ENCODE measurements at regions of chr2 and their contacts with region 1.

Region 1: GRCh38 chr2:165434865-165435496 is 34.5 kb upstream of the CSRNP3 start:
- DNase-seq: peak in 1 of 2 experiments; percentile 57
- H3K4me3 ChIP-seq: no peak overlapping the region
- H3K4me3 Mint-ChIP-seq: peak overlapping the region; percentile 42
- H3K27ac Mint-ChIP-seq: peak overlapping the region; percentile 84
- H3K4me1 ChIP-seq: peaks cover 25% of the 10 kb centered on the region
- H3K4me1 Mint-ChIP-seq: peaks cover 7% of the 10 kb centered on the region
- H3K27me3 ChIP-seq: no peaks in the 10 kb centered on the region
- H3K27me3 Mint-ChIP-seq: no peaks in the 10 kb centered on the region
- CTCF ChIP-seq: no peak

Region 2: GRCh38 chr2:165382362-165382761 is 52.6 kb before region 1 on chr2:
- CTCF ChIA-PET with region 1: no interaction called
- POLR2A ChIA-PET with region 1: no interaction called
- intact Hi-C with region 1: no loop called
- DNase-seq: no peak
- H3K4me3 ChIP-seq: no peak overlapping the region
- H3K4me3 Mint-ChIP-seq: no peak overlapping the region
- H3K27ac Mint-ChIP-seq: no peak overlapping the region
- H3K4me1 ChIP-seq: no peaks in the 10 kb centered on the region
- H3K4me1 Mint-ChIP-seq: no peaks in the 10 kb centered on the region
- H3K27me3 ChIP-seq: no peaks in the 10 kb centered on the region
- H3K27me3 Mint-ChIP-seq: peaks cover 14% of the 10 kb centered on the region
- CTCF ChIP-seq: no peak

Region 3: DNA sequence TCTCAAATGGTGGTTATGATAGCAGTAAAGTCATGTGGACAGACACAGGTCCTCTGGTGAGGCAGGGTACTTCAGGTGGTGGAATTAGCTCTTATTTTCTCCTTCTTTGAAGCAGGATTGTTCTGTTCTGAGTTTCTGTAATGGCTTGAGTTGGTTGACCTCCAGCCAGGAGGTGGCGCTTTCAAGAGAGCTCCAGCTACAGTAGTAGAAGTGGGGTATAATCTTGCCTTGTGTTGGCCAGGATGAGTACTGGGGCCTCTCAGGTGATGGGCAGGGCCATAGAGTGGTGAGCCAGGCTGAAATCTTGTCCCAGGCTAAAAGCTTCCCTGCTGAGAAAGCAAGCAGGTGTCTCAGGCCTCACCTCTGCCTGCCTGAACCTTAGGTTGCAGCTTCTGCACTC is 18.0 kb before region 1 on chr2:
- CTCF ChIA-PET with region 1: no interaction called
- POLR2A ChIA-PET with region 1: no interaction called
- intact Hi-C with region 1: loop called (anchors 1 kb)
- DNase-seq: no peak
- H3K4me3 ChIP-seq: no peak overlapping the region
- H3K4me3 Mint-ChIP-seq: peak overlapping the region; percentile 17
- H3K27ac Mint-ChIP-seq: peak overlapping the region; percentile 55
- H3K4me1 ChIP-seq: peaks cover 14% of the 10 kb centered on the region
- H3K4me1 Mint-ChIP-seq: peaks cover 16% of the 10 kb centered on the region
- H3K27me3 ChIP-seq: no peaks in the 10 kb centered on the region
- H3K27me3 Mint-ChIP-seq: no peaks in the 10 kb centered on the region
- CTCF ChIP-seq: no peak

Region 4: GRCh38 chr2:165469417-165469816 is 34.4 kb after region 1 on chr2 and contains the start of gene CSRNP3:
- CTCF ChIA-PET with region 1: interaction called, 4 read pairs
- POLR2A ChIA-PET with region 1: no interaction called
- intact Hi-C with region 1: loop called (anchors 1 kb)
- DNase-seq: peak; percentile 71 to 80
- H3K4me3 ChIP-seq: peak within 1 kb of the TSS; percentile 43
- H3K4me3 Mint-ChIP-seq: peak within 1 kb of the TSS; percentile 76
- H3K27ac Mint-ChIP-seq: no peak within 1 kb of the TSS
- H3K4me1 ChIP-seq: no peaks in the 10 kb centered on the region; the same call in 1 of the 2 replicates
- H3K4me1 Mint-ChIP-seq: no peaks in the 10 kb centered on the region
- H3K27me3 ChIP-seq: peaks cover 1% of the 10 kb centered on the region
- H3K27me3 Mint-ChIP-seq: no peaks in the 10 kb centered on the region
- CTCF ChIP-seq: no peak
- total RNA-seq, gene CSRNP3: 1.2 and 1.3 TPM in 2 replicates

Measured in Caco-2 (cell line).